ENCODE measurements at regions of chr6 and their contacts with region 1.

Region 1: DNA sequence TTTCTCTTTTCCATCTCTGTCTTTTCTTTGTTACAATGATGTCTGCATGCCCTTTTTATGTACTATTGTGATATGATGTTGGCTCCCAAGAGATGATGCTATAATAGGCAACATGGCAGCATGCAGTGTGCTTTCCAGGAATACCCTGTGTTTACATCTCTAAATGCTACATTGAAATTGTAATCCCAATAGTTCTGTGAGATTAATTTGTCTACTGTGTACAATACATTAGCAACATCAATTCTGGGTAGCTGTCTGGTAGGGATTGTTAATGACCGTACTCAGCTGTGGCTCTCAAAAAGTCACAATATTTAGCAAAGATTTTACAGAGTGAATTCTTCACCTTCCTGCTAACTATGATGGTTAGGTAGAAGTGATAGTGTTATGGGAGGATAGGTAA is 225.6 kb upstream of the MMS22L start:
- DNase-seq: no peak
- CTCF ChIP-seq: no peak

Region 2: GRCh38 chr6:97535800-97536199 is 27.2 kb after region 1 on chr6:
- CTCF ChIA-PET with region 1: interaction called, 14 read pairs
- POLR2A ChIA-PET with region 1: no interaction called
- DNase-seq: no peak
- CTCF ChIP-seq: no peak